ENCODE measurements at regions of chr6 and their contacts with region 1.

Region 1: GRCh38 chr6:130560231-130560630 is 194.4 kb downstream of the TMEM200A start:
- DNase-seq: no peak
- ATAC-seq: peak; percentile 71
- H3K4me3 ChIP-seq: no peak overlapping the region
- H3K27ac ChIP-seq: no peak overlapping the region
- H3K4me1 ChIP-seq: no peaks in the 10 kb centered on the region
- H3K27me3 ChIP-seq: no peaks in the 10 kb centered on the region
- CTCF ChIP-seq: no peak
- EP300 ChIP-seq: no peak
- POLR2A ChIP-seq: no peak
- RAD21 ChIP-seq: no peak

Region 2: GRCh38 chr6:129525055-129525454 is 1035.2 kb before region 1 on chr6:
- CTCF ChIA-PET with region 1: no interaction called
- POLR2A ChIA-PET with region 1: no interaction called
- RAD21 ChIA-PET with region 1: no interaction called
- SMC1A ChIA-PET with region 1: no interaction called
- in situ Hi-C with region 1: no loop called
- intact Hi-C with region 1: no loop called
- DNase-seq: no peak
- ATAC-seq: no peak
- H3K4me3 ChIP-seq: no peak overlapping the region
- H3K27ac ChIP-seq: no peak overlapping the region
- H3K4me1 ChIP-seq: no peaks in the 10 kb centered on the region
- H3K27me3 ChIP-seq: no peaks in the 10 kb centered on the region
- CTCF ChIP-seq: no peak
- EP300 ChIP-seq: no peak
- POLR2A ChIP-seq: no peak
- RAD21 ChIP-seq: no peak

Region 3: GRCh38 chr6:130525408-130525807 is 34.8 kb before region 1 on chr6:
- CTCF ChIA-PET with region 1: interaction called, 3 read pairs
- POLR2A ChIA-PET with region 1: interaction called, 3 read pairs
- RAD21 ChIA-PET with region 1: interaction called, 7 read pairs
- SMC1A ChIA-PET with region 1: interaction called, 62 read pairs
- in situ Hi-C with region 1: no loop called
- intact Hi-C with region 1: no loop called
- DNase-seq: no peak
- ATAC-seq: peak; percentile 64
- H3K4me3 ChIP-seq: no peak overlapping the region
- H3K27ac ChIP-seq: no peak overlapping the region
- H3K4me1 ChIP-seq: peaks cover 2% of the 10 kb centered on the region; the same call in 1 of the 2 replicates
- H3K27me3 ChIP-seq: no peaks in the 10 kb centered on the region
- CTCF ChIP-seq: no peak
- EP300 ChIP-seq: no peak
- POLR2A ChIP-seq: no peak
- RAD21 ChIP-seq: peak; percentile 24; the same call in 1 of the 2 replicates

Region 4: GRCh38 chr6:130537447-130537846 is 22.8 kb before region 1 on chr6:
- CTCF ChIA-PET with region 1: interaction called, 3 read pairs
- POLR2A ChIA-PET with region 1: interaction called, 3 read pairs
- RAD21 ChIA-PET with region 1: interaction called, 4 read pairs
- SMC1A ChIA-PET with region 1: interaction called, 31 read pairs
- in situ Hi-C with region 1: no loop called
- intact Hi-C with region 1: no loop called
- DNase-seq: no peak
- ATAC-seq: no peak
- H3K4me3 ChIP-seq: no peak overlapping the region
- H3K27ac ChIP-seq: no peak overlapping the region
- H3K4me1 ChIP-seq: no peaks in the 10 kb centered on the region
- H3K27me3 ChIP-seq: no peaks in the 10 kb centered on the region
- CTCF ChIP-seq: no peak
- EP300 ChIP-seq: no peak
- POLR2A ChIP-seq: no peak
- RAD21 ChIP-seq: no peak

Region 5: DNA sequence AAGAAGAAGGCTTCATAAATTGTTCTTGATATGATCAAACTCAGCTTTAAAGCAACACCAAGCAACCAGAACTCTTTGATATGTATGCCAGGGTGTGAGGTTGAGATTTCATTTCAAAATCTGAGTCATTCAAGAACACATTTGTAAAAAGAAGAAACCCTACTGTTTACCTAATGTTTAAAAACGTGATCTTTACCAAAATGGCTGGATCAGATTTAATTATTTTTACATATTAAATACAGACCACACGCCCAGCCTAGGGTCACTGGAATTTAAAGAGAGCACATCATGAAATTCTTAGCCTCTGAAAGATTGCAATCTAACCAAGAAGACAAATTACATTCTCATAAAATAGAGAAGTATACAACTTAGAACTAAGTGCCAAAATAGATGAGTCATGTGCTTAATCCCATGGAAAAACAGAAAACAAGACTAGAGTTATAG is 60.1 kb after region 1 on chr6:
- CTCF ChIA-PET with region 1: no interaction called
- POLR2A ChIA-PET with region 1: no interaction called
- RAD21 ChIA-PET with region 1: interaction called, 3 read pairs
- SMC1A ChIA-PET with region 1: interaction called, 9 read pairs
- in situ Hi-C with region 1: no loop called
- intact Hi-C with region 1: loop called (anchors 5 kb)
- DNase-seq: no peak
- ATAC-seq: peak; percentile 47
- H3K4me3 ChIP-seq: no peak overlapping the region
- H3K27ac ChIP-seq: no peak overlapping the region
- H3K4me1 ChIP-seq: peaks cover 3% of the 10 kb centered on the region; the same call in 1 of the 2 replicates
- H3K27me3 ChIP-seq: no peaks in the 10 kb centered on the region
- CTCF ChIP-seq: no peak
- EP300 ChIP-seq: no peak
- POLR2A ChIP-seq: no peak
- RAD21 ChIP-seq: no peak

Measured in GM12878 (cell line).